ENCODE measurements at regions of chr17 and their contacts with region 1.

Region 1: DNA sequence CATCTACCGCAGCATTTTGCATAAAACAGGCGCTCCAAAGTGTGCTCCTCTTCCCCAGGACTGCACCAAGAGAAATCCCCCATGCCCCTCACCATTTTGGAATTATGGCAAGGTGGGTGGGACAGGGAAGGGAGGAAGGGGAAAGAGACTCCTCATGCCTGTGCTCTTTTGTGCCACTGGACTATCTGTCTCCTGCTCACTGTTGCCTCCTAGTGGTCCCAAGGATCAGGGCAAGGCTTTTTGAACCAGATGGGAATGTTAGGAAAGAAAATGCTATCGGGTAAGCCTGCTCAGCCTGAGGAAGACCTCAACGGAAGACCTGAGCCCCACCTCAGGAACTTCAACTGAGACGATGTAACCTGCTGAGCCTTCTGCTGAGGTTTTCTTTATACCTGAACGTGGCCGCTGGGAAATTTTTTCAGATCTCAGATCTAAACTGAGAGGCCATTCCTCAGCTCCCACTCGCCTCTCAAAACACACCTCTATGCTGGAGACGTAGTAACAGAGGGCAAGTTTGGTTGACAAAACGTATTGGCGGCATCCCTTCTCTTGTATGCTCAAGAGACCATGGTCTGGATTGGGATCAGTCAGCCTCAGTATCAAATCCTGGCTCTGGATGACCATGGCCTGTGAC is 58.3 kb downstream of the SPACA3 start:
- DNase-seq: peak in 3 of 5 donors; percentile 21 to 42 (median 34)
- ATAC-seq: no peak
- H3K4me3 ChIP-seq: no peak overlapping the region
- H3K27ac ChIP-seq: no peak overlapping the region
- H3K4me1 ChIP-seq: peaks cover 0 to 1% (median 0%) of the 10 kb centered on the region in 12 donors
- H3K27me3 ChIP-seq: peaks cover 0 to 21% (median 0%) of the 10 kb centered on the region in 9 donors
- CTCF ChIP-seq: peak; percentile 59 to 84 (median 76)
- POLR2A ChIP-seq: no peak

Region 2: DNA sequence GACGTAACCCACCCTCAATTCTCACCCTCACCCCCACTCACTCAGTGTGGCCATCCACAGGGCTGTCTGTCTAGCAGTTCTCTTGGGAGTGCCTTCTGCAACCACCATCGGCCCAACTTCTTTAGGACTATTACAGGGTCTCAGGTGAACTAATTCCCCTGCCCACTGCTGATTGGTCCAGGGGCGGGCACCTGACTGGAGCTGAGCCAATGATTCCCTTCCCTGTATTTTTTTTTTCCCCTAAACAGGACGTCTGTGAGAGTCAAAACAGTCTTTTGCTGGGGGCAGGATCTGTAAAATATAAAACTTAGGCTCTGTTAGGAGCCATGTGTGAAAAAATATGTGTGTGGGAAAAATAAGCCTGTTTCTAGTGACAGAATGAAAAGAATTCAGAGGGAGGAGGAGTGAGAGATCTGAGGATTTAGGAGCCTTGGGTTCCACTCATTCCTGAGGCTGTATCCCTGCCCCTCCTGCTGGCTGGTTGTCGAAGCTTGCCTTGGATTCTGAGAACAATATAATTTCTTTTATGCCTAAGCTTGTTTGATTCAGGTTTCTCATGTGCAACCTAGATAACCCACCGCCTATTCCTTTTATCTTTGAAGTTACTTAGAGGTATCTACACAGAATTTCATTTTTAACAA is 56.7 kb after region 1 on chr17:
- intact Hi-C with region 1: loop called in 1 of 10 experiments (anchors 10 kb)
- DNase-seq: no peak
- ATAC-seq: no peak
- H3K4me3 ChIP-seq: no peak overlapping the region
- H3K27ac ChIP-seq: no peak overlapping the region
- H3K4me1 ChIP-seq: no peaks in the 10 kb centered on the region
- H3K27me3 ChIP-seq: peaks cover 0 to 23% (median 0%) of the 10 kb centered on the region in 9 donors
- CTCF ChIP-seq: no peak
- POLR2A ChIP-seq: no peak

Region 3: DNA sequence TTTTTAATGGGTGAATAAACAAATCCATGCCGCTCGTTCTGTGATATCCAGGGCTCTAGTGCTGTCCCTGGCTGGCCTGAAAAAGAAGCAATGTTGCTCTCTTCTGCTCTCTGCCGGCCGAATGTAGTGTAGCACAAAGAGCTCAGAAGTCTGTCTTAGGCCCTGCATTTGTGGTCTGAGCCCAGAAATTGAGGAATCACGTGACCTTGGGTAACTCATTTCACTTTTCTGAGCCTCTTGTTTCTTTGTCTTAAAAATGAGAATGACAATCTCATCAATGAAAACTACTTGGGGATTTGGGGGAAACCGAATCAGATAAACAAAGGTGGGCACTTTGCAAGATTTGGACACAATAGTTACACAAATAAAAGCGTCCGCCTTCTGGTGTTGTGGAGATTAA is 624.8 kb after region 1 on chr17:
- intact Hi-C with region 1: loop called in 2 of 10 experiments (anchors 10 kb)
- DNase-seq: peak in 4 of 5 donors; percentile 41 to 59 (median 44)
- ATAC-seq: peak; percentile 73 to 88 (median 87)
- H3K4me3 ChIP-seq: no peak overlapping the region
- H3K27ac ChIP-seq: no peak overlapping the region
- H3K4me1 ChIP-seq: no peaks in the 10 kb centered on the region
- H3K27me3 ChIP-seq: peaks cover 0 to 8% (median 0%) of the 10 kb centered on the region in 9 donors
- CTCF ChIP-seq: peak; percentile 63 to 87 (median 80)
- POLR2A ChIP-seq: no peak